Cardiac septum (tissue), 1 donor: ENCODE measurements at regions of chr9 and their contacts with region 1.

Region 1: GRCh38 chr9:97501177-97501971 is at the start of gene TMOD1:
- DNase-seq: peak; percentile 89
- total RNA-seq, gene TMOD1: 151 TPM

Region 2: GRCh38 chr9:97176206-97176605 is 325.2 kb before region 1 on chr9:
- intact Hi-C with region 1: no loop called
- DNase-seq: no peak

Region 3: GRCh38 chr9:97411789-97412625 is 89.4 kb before region 1 on chr9 and contains the start of gene TDRD7:
- intact Hi-C with region 1: loop called (anchors 5 kb)
- DNase-seq: peak; percentile 96
- total RNA-seq, gene TDRD7: 8.8 TPM

Region 4: GRCh38 chr9:97468658-97469448 is 32.5 kb before region 1 on chr9:
- intact Hi-C with region 1: loop called (anchors 2 kb)
- DNase-seq: peak; percentile 80

Region 5: GRCh38 chr9:97529363-97530076 is 28.1 kb after region 1 on chr9:
- intact Hi-C with region 1: loop called (anchors 2 kb)
- DNase-seq: no peak